Psoas muscle (tissue), 8 donors: ENCODE measurements at regions of chr15 and their contacts with region 1.

Region 1: DNA sequence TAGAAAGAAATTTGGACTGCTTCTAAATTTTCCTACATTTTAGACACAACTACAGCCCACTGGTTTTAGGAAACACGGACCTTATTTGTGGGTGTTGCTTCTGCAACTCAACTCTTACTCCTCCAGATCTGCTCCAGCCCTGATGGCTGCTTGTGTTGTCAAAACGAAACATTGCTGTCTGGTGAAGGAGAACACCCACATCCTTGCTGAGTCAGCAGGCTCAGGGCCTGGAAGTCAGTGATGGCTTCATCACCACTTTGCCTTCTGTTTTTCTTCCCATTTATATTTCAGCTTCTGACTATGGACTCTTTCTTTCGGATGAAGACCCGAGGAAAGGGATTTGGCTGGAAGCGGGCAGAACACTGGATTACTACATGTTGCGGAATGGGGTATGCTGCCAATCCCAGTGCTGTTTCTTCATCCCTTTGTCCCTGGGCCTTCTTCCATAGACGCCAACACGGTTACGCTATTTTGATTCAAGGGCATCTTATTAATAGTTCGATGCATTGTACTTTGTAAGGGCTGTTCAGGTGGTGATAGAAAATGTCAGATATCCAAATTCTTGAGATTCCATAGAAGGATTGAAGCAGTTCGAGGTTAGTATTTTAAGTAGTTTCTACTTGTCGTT is 392.6 kb upstream of the TPM1 start:
- DNase-seq: no peak
- ATAC-seq: peak in 3 of 4 donors; percentile 55 to 76 (median 58)
- H3K4me3 ChIP-seq: no peak overlapping the region
- H3K27ac ChIP-seq: peak overlapping the region; percentile 46
- H3K4me1 ChIP-seq: peaks cover 15% of the 10 kb centered on the region
- H3K27me3 ChIP-seq: no peaks in the 10 kb centered on the region
- CTCF ChIP-seq: no peak

Region 2: DNA sequence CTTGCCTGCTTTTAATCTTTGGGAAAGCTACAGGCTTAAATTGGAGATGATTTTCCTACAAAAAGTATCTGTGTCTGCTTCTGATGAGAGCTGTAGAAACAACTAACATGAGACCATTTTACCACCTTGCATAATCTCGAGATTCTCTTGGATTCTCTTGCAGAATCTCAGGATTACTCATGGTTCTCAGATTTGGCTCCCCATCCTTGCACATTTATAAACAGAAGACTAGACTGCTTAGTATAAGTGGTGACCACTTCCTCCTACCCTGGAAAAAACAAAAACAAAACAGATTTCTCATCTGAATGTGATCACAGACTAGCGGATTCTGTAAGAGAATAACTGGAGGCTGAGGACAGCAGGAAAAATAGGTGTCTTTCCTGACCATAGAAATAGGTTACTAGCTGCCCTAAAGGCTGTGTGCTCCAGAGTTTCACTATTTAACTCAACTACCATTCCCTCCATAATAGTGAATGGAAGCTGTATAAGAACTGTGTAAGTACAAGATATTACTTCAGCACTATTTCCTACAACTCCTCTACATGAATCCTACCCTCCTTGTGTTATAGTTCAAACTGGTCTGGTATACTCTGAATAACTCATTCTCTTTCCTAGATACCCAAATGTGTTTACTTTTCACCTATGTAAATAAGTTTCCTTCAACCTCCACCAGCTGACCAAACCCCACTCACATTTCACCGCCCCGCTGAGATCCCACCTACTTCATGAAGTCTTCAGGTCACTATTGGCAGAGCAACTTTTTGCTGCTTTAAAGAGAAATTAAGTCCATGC is 362.6 kb before region 1 on chr15:
- intact Hi-C with region 1: no loop called
- DNase-seq: no peak
- ATAC-seq: no peak
- H3K4me3 ChIP-seq: no peak overlapping the region
- H3K27ac ChIP-seq: no peak overlapping the region
- H3K4me1 ChIP-seq: no peaks in the 10 kb centered on the region
- H3K27me3 ChIP-seq: peaks cover 0 to 6% (median 0%) of the 10 kb centered on the region in 3 donors
- CTCF ChIP-seq: no peak

Region 3: GRCh38 chr15:62455441-62455921 is 194.4 kb before region 1 on chr15:
- intact Hi-C with region 1: loop called in 1 of 2 experiments (anchors 5 kb)
- DNase-seq: peak in 1 of 2 donors; percentile 79
- ATAC-seq: peak; percentile 54 to 71 (median 68)
- H3K4me3 ChIP-seq: peak overlapping the region; percentile 42
- H3K27ac ChIP-seq: peak overlapping the region; percentile 86
- H3K4me1 ChIP-seq: peaks cover 59% of the 10 kb centered on the region
- H3K27me3 ChIP-seq: no peaks in the 10 kb centered on the region
- CTCF ChIP-seq: no peak

Region 4: DNA sequence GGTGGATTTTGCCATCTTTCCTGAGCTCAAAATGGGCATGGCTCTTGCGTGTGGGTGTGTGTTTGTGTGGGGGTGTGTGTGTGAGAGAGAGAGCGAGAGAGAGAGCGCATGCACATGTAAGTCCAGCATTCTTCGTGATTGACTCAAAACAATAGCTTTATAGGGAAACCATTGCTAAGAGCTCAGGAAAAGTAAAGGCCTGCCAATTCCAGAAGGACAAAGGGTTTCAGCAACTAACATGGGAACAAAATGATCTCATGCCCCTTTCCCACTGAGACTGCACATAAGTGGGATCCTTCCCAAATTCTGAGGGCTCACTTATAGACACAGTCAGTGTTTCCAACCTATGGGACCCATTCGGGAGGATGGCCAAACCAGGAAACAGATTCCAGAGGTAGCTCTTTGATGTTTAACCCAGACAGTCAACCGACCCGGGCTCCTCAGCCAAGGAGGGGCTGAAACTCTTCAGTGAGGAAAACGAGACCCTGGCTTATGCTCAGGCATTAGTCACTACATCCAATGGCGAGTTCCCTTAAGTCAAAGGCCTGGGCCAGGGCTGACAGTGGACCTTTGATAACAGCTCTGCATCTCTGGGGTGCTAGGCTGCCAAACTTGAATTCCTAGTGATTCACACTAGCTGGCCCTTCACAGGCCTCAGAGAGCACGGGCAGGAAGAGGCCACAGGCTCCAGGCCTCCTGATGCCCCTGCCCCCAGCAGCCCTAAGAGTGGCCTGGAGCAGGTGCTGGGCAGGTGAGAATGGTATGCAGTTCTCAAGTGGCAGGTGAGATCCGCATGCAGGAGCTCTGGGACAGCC is 179.8 kb before region 1 on chr15:
- intact Hi-C with region 1: loop called in 1 of 2 experiments (anchors 5 kb)
- DNase-seq: peak; percentile 67 to 78
- ATAC-seq: peak; percentile 54 to 77 (median 62)
- H3K4me3 ChIP-seq: no peak overlapping the region
- H3K27ac ChIP-seq: peak overlapping the region; percentile 82
- H3K4me1 ChIP-seq: peaks cover 51% of the 10 kb centered on the region
- H3K27me3 ChIP-seq: no peaks in the 10 kb centered on the region
- CTCF ChIP-seq: no peak

Region 5: GRCh38 chr15:62742409-62743171 is 92.7 kb after region 1 on chr15:
- intact Hi-C with region 1: no loop called
- DNase-seq: peak; percentile 70 to 83
- ATAC-seq: peak; percentile 61 to 83 (median 66)
- H3K4me3 ChIP-seq: no peak overlapping the region
- H3K27ac ChIP-seq: peak overlapping the region; percentile 24
- H3K4me1 ChIP-seq: peaks cover 10% of the 10 kb centered on the region
- H3K27me3 ChIP-seq: no peaks in the 10 kb centered on the region
- CTCF ChIP-seq: peak; percentile 74

Region 6: DNA sequence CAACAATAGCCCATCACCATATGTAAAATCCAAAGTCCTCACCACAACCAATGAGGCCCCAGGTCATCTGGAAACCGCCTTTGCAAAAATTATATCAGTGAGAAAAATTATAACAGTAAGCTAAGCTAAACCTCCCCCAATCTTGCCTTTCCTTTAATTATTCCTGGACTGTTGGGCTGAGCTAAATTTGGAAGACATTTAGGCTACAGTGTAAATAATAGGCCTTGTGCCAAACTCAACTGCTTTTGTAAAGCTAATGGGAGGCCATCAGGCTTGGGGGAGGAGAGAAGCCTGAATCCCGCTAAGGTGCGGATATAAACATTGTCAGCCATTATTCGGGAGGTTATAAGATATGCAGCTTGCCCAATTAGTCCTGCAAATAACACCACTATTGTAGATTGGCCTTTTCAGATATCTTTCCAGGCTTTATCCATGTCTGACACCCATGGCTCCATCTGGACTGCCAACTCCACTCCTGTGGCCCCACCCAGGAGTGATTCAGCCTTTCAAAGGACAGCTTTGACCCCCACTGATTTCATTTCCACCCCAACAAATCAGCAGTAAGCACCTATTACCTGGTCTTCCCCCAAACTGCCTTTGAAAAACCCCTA is 784.8 kb after region 1 on chr15:
- intact Hi-C with region 1: no loop called
- DNase-seq: no peak
- ATAC-seq: no peak
- H3K4me3 ChIP-seq: no peak overlapping the region
- H3K27ac ChIP-seq: no peak overlapping the region
- H3K4me1 ChIP-seq: peaks cover 6% of the 10 kb centered on the region
- H3K27me3 ChIP-seq: no peaks in the 10 kb centered on the region
- CTCF ChIP-seq: no peak